Left cardiac atrium (tissue), 4 donors: ENCODE measurements at regions of chr20 and their contacts with region 1.

Region 1: DNA sequence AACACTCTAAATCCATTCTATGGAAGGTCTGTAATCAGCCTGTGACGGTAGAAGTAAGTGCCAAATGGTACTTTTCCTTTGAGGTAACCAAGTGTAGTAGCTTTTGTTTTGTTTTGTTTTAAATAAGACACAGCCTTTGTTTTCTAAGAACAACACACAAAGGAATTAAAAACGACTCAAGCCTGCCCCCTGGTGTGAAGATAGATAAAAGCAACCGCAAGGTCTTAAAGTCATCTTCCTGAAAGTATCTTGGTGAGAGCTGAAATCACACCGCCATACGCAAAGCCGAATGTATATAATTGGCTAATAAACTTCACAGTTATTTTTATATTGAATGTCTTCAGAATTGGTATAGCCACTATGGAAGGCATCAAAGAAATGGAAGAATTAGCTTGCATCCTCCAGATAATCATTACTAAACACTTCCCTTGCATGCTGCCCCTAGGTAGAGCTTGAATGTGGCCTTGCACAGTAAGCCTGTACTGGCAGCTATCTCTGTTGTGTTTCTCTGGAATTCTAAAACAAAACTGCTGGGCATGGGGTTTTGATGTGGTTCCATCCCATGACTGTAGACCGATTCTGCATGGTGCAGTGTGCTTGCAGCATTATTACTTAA is 95.6 kb downstream of the LAMP5 start:
- DNase-seq: no peak
- ATAC-seq: no peak

Region 2: DNA sequence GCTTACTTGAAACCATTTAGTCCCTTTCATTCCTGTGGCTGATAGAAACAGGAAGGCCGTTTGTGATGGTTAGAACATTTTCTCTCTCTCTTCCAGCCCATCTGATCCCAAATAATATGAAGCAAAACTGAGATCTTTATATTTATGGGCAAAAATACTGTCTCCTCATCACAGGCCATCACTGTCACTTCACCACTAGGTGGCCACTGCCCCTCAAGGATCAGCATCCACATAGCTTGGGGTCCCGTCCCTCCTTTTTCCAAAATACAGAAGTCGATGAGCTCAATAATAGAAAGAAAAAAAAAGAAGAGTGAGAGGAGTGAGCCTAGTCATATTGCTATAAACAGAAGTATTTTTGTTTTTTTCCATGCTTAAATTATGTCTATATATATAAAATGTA is 142.0 kb before region 1 on chr20:
- intact Hi-C with region 1: loop called in 1 of 2 experiments (anchors 10 kb)
- DNase-seq: no peak
- ATAC-seq: no peak

Region 3: GRCh38 chr20:9532069-9532838 is 77.7 kb before region 1 on chr20:
- intact Hi-C with region 1: no loop called
- DNase-seq: no peak
- ATAC-seq: no peak

Region 4: GRCh38 chr20:9736373-9736772 is 126.4 kb after region 1 on chr20:
- intact Hi-C with region 1: no loop called
- DNase-seq: no peak
- ATAC-seq: no peak